Activated CD4-positive, alpha-beta T cell treated with anti-CD3 and anti-CD28 coated beads, Interleukin-2, amount 10 ng/mL, durations not matched to agents 24 days and 14 days (primary cell): ENCODE measurements at regions of chr13 and their contacts with region 1.

Region 1: GRCh38 chr13:30257468-30258099 is 49.8 kb downstream of the KATNAL1 start:
- DNase-seq: no peak
- H3K4me3 Mint-ChIP-seq: no peak overlapping the region
- H3K27ac Mint-ChIP-seq: no peak overlapping the region
- H3K4me1 Mint-ChIP-seq: peaks cover 15% of the 10 kb centered on the region
- H3K27me3 Mint-ChIP-seq: no peaks in the 10 kb centered on the region

Region 2: DNA sequence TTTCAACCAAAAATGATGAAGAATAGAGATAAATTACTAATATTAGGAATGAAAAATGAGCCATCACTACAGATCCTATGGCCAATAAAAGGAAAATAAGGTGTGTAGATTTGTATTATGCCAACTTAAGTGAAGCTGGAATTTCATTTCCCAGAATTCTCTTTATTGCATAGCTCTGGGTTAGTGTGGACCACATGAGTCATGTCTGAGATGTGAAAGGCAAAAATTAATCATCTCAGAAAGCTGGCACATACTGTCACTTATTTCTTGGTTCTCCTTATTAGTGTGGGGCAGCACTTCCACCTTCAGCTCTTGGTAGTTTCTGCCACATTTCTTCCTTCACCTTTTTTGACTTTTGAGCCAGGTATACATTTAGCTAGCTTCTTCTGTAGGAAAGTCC is 32.9 kb before region 1 on chr13:
- intact Hi-C with region 1: loop called (anchors 1 kb)
- DNase-seq: no peak
- H3K4me3 Mint-ChIP-seq: no peak overlapping the region
- H3K27ac Mint-ChIP-seq: no peak overlapping the region
- H3K4me1 Mint-ChIP-seq: peaks cover 5% of the 10 kb centered on the region
- H3K27me3 Mint-ChIP-seq: no peaks in the 10 kb centered on the region

Region 3: GRCh38 chr13:30341815-30342570 is 84.4 kb after region 1 on chr13:
- intact Hi-C with region 1: no loop called
- DNase-seq: no peak
- H3K4me3 Mint-ChIP-seq: no peak overlapping the region
- H3K27ac Mint-ChIP-seq: no peak overlapping the region
- H3K4me1 Mint-ChIP-seq: peaks cover 24% of the 10 kb centered on the region
- H3K27me3 Mint-ChIP-seq: no peaks in the 10 kb centered on the region